GM12878 (cell line): ENCODE measurements at regions of chr3 and their contacts with region 1.

Region 1: DNA sequence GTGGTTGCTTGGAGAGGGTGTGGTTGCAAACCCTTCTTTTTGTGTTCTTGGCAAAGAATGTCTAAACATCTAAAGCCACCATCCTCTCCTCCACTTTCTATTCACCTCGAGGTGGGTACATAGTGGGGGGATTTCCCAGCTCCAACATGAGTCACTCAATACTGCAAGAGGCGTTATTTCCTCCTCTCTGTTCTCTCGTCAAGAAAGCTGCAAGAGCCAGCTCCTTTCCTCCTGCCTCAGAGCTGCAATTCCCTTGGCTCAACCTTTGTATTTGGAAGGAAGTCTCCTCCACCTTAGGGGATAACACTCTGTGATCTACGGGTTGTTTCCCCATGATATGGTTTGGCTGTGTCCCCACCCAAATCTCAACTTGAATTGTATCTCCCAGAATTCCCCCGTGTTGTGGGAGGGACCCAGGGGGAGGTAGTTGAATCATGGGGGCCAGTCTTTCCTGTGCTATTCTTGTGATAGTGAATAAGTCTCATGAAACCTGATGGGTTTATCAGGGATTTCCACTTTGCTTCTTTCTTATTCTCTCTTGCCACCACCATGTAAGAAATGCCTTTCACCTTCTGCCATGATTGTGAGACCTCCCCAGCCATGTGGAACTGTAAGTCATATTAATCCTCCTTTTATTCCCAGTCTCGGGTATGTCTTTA is 138.4 kb downstream of the PLCL2 start:
- DNase-seq: peak; percentile 56
- ATAC-seq: peak; percentile 99
- H3K4me3 ChIP-seq: no peak overlapping the region
- H3K27ac ChIP-seq: peak overlapping the region; percentile 45; the same call in 1 of the 2 replicates
- H3K4me1 ChIP-seq: no peaks in the 10 kb centered on the region
- H3K27me3 ChIP-seq: no peaks in the 10 kb centered on the region
- CTCF ChIP-seq: no peak
- EP300 ChIP-seq: peak in 1 of 2 experiments; percentile 41; a peak in 2 of 4 replicates
- POLR2A ChIP-seq: no peak
- RAD21 ChIP-seq: no peak

Region 2: GRCh38 chr3:16665282-16665741 is 357.8 kb before region 1 on chr3:
- CTCF ChIA-PET with region 1: no interaction called
- POLR2A ChIA-PET with region 1: no interaction called
- RAD21 ChIA-PET with region 1: no interaction called
- SMC1A ChIA-PET with region 1: no interaction called
- in situ Hi-C with region 1: no loop called
- intact Hi-C with region 1: no loop called
- DNase-seq: no peak
- ATAC-seq: peak; percentile 38; the same call in 1 of the 3 replicates
- H3K4me3 ChIP-seq: no peak overlapping the region
- H3K27ac ChIP-seq: no peak overlapping the region
- H3K4me1 ChIP-seq: no peaks in the 10 kb centered on the region
- H3K27me3 ChIP-seq: 0 out of 4 replicates have a peak, but pooled peaks cover 0 to 3% of the 10 kb centered on the region in 2 experiments
- CTCF ChIP-seq: no peak
- EP300 ChIP-seq: no peak
- POLR2A ChIP-seq: no peak
- RAD21 ChIP-seq: no peak

Region 3: GRCh38 chr3:16849229-16849628 is 173.9 kb before region 1 on chr3:
- CTCF ChIA-PET with region 1: interaction called, 4 read pairs
- POLR2A ChIA-PET with region 1: interaction called, 4 read pairs
- RAD21 ChIA-PET with region 1: interaction called, 3 read pairs
- SMC1A ChIA-PET with region 1: interaction called, 12 read pairs
- in situ Hi-C with region 1: no loop called
- intact Hi-C with region 1: no loop called
- DNase-seq: no peak
- ATAC-seq: peak; percentile 94
- H3K4me3 ChIP-seq: 0 out of 2 replicates have a peak overlapping the region, but pooled peaks have one; percentile 25
- H3K27ac ChIP-seq: peak overlapping the region; percentile 51; the same call in 1 of the 2 replicates
- H3K4me1 ChIP-seq: peaks cover 16% of the 10 kb centered on the region
- H3K27me3 ChIP-seq: no peaks in the 10 kb centered on the region
- CTCF ChIP-seq: no peak
- EP300 ChIP-seq: no peak
- POLR2A ChIP-seq: no peak
- RAD21 ChIP-seq: no peak

Region 4: DNA sequence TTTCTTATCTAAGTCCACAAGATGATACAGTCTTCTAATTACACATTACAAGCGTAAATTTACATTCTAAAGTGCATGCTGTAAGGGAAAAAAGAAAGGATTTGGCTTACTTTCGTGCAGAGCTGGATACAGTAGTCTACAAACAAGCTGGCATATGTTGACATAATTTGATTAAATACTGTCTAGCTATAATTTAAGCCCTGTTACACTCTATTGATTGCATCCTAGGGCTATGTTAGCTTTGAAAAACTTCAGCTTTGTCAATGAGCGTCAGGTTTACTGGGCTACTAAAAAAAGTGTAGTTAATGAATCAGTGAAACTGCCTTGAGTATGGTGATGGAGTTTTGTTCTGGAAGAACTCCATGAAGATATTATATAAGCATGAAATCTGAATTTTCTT is 162.9 kb before region 1 on chr3:
- CTCF ChIA-PET with region 1: no interaction called
- POLR2A ChIA-PET with region 1: no interaction called
- RAD21 ChIA-PET with region 1: no interaction called
- SMC1A ChIA-PET with region 1: no interaction called
- in situ Hi-C with region 1: no loop called
- intact Hi-C with region 1: no loop called
- DNase-seq: no peak
- ATAC-seq: no peak
- H3K4me3 ChIP-seq: no peak overlapping the region
- H3K27ac ChIP-seq: no peak overlapping the region
- H3K4me1 ChIP-seq: no peaks in the 10 kb centered on the region
- H3K27me3 ChIP-seq: no peaks in the 10 kb centered on the region
- CTCF ChIP-seq: no peak
- EP300 ChIP-seq: no peak
- POLR2A ChIP-seq: no peak
- RAD21 ChIP-seq: no peak

Region 5: DNA sequence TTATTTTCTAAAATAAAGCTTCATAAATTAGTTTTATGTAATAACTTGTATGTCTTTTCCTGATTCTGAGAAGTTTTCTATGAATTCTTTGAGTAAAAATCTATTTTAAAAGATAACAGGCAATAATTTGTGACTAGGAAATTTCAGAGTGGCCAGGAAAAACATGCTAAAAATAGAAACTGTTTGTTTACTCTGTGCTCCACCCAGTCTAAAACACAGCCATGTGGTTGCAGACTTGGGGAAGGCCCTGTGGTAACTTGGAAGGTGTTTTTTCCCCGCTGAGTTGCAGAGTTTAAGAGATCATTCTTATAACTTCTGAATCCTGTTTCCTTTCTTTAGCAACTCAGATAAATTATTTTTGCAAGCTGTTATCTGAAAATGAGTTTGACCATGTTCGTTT is 116.5 kb before region 1 on chr3:
- CTCF ChIA-PET with region 1: interaction called, 13 read pairs
- POLR2A ChIA-PET with region 1: interaction called, 3 read pairs
- RAD21 ChIA-PET with region 1: interaction called, 8 read pairs
- SMC1A ChIA-PET with region 1: interaction called, 8 read pairs
- in situ Hi-C with region 1: no loop called
- intact Hi-C with region 1: no loop called
- DNase-seq: no peak
- ATAC-seq: peak; percentile 62
- H3K4me3 ChIP-seq: no peak overlapping the region
- H3K27ac ChIP-seq: peak overlapping the region; percentile 63
- H3K4me1 ChIP-seq: peaks cover 50% of the 10 kb centered on the region
- H3K27me3 ChIP-seq: no peaks in the 10 kb centered on the region
- CTCF ChIP-seq: no peak
- EP300 ChIP-seq: no peak
- POLR2A ChIP-seq: no peak
- RAD21 ChIP-seq: no peak

Region 6: GRCh38 chr3:16928386-16929132 is 94.6 kb before region 1 on chr3:
- CTCF ChIA-PET with region 1: interaction called, 42 read pairs
- POLR2A ChIA-PET with region 1: interaction called, 8 read pairs
- RAD21 ChIA-PET with region 1: interaction called, 29 read pairs
- SMC1A ChIA-PET with region 1: interaction called, 51 read pairs
- in situ Hi-C with region 1: no loop called
- intact Hi-C with region 1: loop called (anchors 5 kb)
- DNase-seq: no peak
- ATAC-seq: peak; percentile 69
- H3K4me3 ChIP-seq: 0 out of 2 replicates have a peak overlapping the region, but pooled peaks have one; percentile 4
- H3K27ac ChIP-seq: peak overlapping the region; percentile 63
- H3K4me1 ChIP-seq: peaks cover 66% of the 10 kb centered on the region
- H3K27me3 ChIP-seq: no peaks in the 10 kb centered on the region
- CTCF ChIP-seq: no peak
- EP300 ChIP-seq: no peak
- POLR2A ChIP-seq: no peak
- RAD21 ChIP-seq: no peak

Region 7: DNA sequence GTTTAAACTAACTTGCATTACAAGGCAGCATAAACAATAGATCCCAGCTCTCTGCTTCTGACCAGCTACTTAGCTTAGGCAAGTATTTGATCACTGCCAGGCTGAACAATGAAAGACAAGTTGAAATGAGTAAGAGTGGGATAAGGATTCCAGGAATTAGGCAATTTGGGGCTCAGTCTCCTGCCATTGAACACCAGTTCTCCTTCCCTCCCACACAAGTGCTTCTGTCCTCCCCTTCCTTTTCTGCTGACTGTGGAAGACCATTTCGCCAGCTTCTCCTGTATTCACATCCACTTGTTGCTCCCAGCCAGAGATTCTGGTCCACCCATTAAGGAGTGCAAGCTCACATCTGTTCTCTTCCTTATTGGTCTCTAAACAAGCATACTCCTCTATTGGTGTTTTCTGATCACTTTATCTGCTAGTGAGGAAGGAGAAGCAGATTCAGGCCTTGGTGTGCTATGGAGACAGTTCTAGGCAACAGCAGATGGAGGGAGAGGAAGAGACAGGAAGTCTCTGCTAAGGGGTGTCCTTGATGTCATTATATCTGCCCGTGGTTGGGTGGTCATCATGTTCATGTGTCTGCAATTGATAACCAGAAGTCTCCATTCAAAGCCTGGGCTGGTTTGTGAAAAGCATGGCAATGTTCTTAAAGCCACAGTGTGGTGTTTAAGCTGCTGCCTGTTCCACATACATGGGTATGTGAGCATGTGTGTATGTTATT is 16.8 kb before region 1 on chr3:
- CTCF ChIA-PET with region 1: interaction called, 3 read pairs
- POLR2A ChIA-PET with region 1: interaction called, 4 read pairs
- RAD21 ChIA-PET with region 1: interaction called, 4 read pairs
- SMC1A ChIA-PET with region 1: interaction called, 17 read pairs
- in situ Hi-C with region 1: no loop called
- intact Hi-C with region 1: no loop called
- DNase-seq: no peak
- ATAC-seq: peak; percentile 72
- H3K4me3 ChIP-seq: no peak overlapping the region
- H3K27ac ChIP-seq: no peak overlapping the region
- H3K4me1 ChIP-seq: peaks cover 9% of the 10 kb centered on the region; the same call in 1 of the 2 replicates
- H3K27me3 ChIP-seq: no peaks in the 10 kb centered on the region
- CTCF ChIP-seq: no peak
- EP300 ChIP-seq: no peak
- POLR2A ChIP-seq: no peak
- RAD21 ChIP-seq: no peak

Region 8: DNA sequence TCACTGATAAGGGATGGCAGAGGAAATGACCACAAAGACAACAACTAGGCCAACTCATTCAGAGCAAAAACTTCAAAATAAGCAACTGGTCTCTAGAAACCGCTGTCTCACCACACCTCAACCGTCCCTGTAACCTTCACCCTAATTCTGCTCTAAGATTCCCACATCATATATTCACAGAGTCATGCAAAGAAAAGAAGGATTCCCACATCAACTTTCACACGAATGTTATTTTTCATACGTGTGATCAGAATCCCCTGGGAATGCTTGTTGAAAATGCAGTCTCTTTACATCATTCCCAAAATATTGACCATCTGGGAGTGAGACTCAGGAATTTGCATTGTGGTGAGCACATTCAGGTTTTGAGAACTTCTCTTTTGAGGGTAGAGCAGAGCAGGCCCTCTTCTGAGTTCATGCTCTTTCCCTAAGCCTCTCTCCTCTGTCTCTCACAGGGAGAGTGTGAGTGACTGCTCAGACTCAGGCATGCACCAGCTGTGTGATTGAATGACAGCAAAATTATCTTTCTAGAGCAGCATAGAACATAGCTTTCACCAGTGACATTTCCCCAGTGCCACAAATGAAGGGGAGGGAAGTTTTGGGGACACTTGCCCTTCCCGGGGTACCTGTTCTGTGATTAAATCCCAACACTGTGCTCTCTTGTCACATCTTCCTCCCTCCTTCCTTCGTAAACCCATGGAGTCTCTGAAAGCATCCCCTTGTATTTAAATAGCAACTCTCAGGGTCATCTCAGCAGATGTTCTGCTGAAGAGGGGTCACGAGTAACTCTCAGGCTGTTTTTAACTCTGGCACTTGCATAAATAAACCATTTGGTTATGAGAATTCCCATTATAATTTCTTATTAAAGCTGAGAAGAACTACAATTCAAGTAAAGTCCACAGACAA is 32.5 kb after region 1 on chr3:
- CTCF ChIA-PET with region 1: no interaction called
- POLR2A ChIA-PET with region 1: interaction called, 3 read pairs
- RAD21 ChIA-PET with region 1: interaction called, 3 read pairs
- SMC1A ChIA-PET with region 1: interaction called, 10 read pairs
- in situ Hi-C with region 1: no loop called
- intact Hi-C with region 1: no loop called
- DNase-seq: peak; percentile 90
- ATAC-seq: peak; percentile 79
- H3K4me3 ChIP-seq: no peak overlapping the region
- H3K27ac ChIP-seq: peak overlapping the region; percentile 97
- H3K4me1 ChIP-seq: peaks cover 34% of the 10 kb centered on the region
- H3K27me3 ChIP-seq: no peaks in the 10 kb centered on the region
- CTCF ChIP-seq: no peak
- EP300 ChIP-seq: peak; percentile 73 to 88
- POLR2A ChIP-seq: no peak
- RAD21 ChIP-seq: peak; percentile 16; the same call in 1 of the 2 replicates

Region 9: GRCh38 chr3:17278006-17278405 is 254.9 kb after region 1 on chr3:
- CTCF ChIA-PET with region 1: no interaction called
- POLR2A ChIA-PET with region 1: no interaction called
- RAD21 ChIA-PET with region 1: no interaction called
- SMC1A ChIA-PET with region 1: no interaction called
- in situ Hi-C with region 1: no loop called
- intact Hi-C with region 1: no loop called
- DNase-seq: no peak
- ATAC-seq: no peak
- H3K4me3 ChIP-seq: no peak overlapping the region
- H3K27ac ChIP-seq: no peak overlapping the region
- H3K4me1 ChIP-seq: no peaks in the 10 kb centered on the region
- H3K27me3 ChIP-seq: no peaks in the 10 kb centered on the region
- CTCF ChIP-seq: no peak
- EP300 ChIP-seq: no peak
- POLR2A ChIP-seq: no peak
- RAD21 ChIP-seq: no peak